T-cell (primary cell): ENCODE measurements at regions of chr20 and their contacts with region 1.

Region 1: DNA sequence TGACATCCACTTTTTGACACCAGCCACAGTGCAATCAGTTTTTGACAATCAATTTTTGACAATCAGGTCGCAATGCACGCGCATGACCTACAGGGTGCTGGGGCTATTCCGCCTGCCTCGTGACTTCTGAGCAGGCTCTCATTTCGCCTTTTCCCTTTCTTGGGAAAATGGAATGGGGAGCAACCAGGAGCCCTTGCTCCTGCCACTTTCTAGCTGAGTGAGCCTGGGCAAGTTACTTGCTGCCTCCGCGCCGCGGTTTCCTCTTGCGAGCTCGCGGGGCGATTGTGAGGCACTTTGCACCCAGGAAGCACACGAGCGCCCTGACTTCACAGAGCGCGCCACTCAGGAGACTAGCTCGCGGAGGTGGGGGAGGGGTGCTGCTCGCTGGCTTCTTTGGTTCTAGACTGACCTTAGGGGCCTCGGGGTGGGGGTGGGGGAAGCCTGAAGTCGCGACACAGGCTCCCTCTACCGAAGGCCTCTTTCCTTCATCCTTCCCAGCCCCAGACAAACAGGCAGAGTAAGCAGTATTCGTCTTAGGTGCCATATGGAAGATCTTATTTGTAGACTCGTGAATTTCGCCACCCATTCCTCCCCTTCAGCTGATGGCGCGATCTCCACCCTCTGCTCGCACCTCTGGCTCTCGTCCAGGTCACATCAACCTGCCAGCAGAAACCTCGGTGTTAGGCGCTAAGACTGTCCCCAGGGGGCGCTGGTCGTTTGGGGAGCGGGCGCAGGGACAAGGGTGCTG is 4.6 kb downstream of the TP53TG5 start:
- DNase-seq: peak; percentile 77 to 96 (median 87)
- ATAC-seq: peak; percentile 85 to 93 (median 91)
- H3K4me3 ChIP-seq: peak overlapping the region; percentile 58 to 62
- H3K4me3 Mint-ChIP-seq: peak overlapping the region; percentile 71 to 85 (median 80)
- H3K27ac ChIP-seq: peak overlapping the region; percentile 83
- H3K27ac Mint-ChIP-seq: peak overlapping the region; percentile 88 to 90
- H3K4me1 ChIP-seq: peaks cover 15 to 26% of the 10 kb centered on the region in 2 experiments
- H3K4me1 Mint-ChIP-seq: peaks cover 28 to 44% (median 39%) of the 10 kb centered on the region in 3 donors
- H3K27me3 ChIP-seq: no peaks in the 10 kb centered on the region
- H3K27me3 Mint-ChIP-seq: no peaks in the 10 kb centered on the region

Region 2: GRCh38 chr20:45229264-45230056 is 144.1 kb before region 1 on chr20:
- CTCF ChIA-PET with region 1: no interaction called
- POLR2A ChIA-PET with region 1: no interaction called
- DNase-seq: peak in 17 of 35 experiments; percentile 3 to 24 (median 13)
- ATAC-seq: no peak
- H3K4me3 ChIP-seq: no peak overlapping the region
- H3K4me3 Mint-ChIP-seq: no peak overlapping the region
- H3K27ac ChIP-seq: no peak overlapping the region
- H3K27ac Mint-ChIP-seq: no peak overlapping the region
- H3K4me1 ChIP-seq: no peaks in the 10 kb centered on the region
- H3K4me1 Mint-ChIP-seq: no peaks in the 10 kb centered on the region
- H3K27me3 ChIP-seq: peaks cover 6 to 20% of the 10 kb centered on the region in 2 experiments
- H3K27me3 Mint-ChIP-seq: peaks cover 42 to 60% of the 10 kb centered on the region in 2 donors

Region 3: GRCh38 chr20:45415774-45416637 is 42.5 kb after region 1 on chr20 and contains the start of gene PIGT:
- CTCF ChIA-PET with region 1: interaction called, 8 to 19 read pairs
- POLR2A ChIA-PET with region 1: interaction called, 5 to 7 read pairs
- DNase-seq: peak; percentile 66 to 96 (median 91)
- ATAC-seq: peak; percentile 98
- H3K4me3 ChIP-seq: peak within 1 kb of the TSS; percentile 86 to 95
- H3K4me3 Mint-ChIP-seq: peak within 1 kb of the TSS; percentile 95 to 96 (median 95)
- H3K27ac ChIP-seq: peak within 1 kb of the TSS; percentile 87
- H3K27ac Mint-ChIP-seq: peak within 1 kb of the TSS; percentile 97 to 99
- H3K4me1 ChIP-seq: peaks cover 7 to 24% of the 10 kb centered on the region in 2 experiments
- H3K4me1 Mint-ChIP-seq: peaks cover 40 to 46% (median 44%) of the 10 kb centered on the region in 3 donors
- H3K27me3 ChIP-seq: no peaks in the 10 kb centered on the region
- H3K27me3 Mint-ChIP-seq: no peaks in the 10 kb centered on the region
- total RNA-seq, gene PIGT: 76.6 to 140 (median 79.4) TPM

Region 4: GRCh38 chr20:45523821-45524220 is 150.3 kb after region 1 on chr20:
- CTCF ChIA-PET with region 1: no interaction called
- POLR2A ChIA-PET with region 1: no interaction called
- DNase-seq: no peak
- ATAC-seq: no peak
- H3K4me3 ChIP-seq: no peak overlapping the region
- H3K4me3 Mint-ChIP-seq: no peak overlapping the region
- H3K27ac ChIP-seq: no peak overlapping the region
- H3K27ac Mint-ChIP-seq: no peak overlapping the region
- H3K4me1 ChIP-seq: no peaks in the 10 kb centered on the region
- H3K4me1 Mint-ChIP-seq: no peaks in the 10 kb centered on the region
- H3K27me3 ChIP-seq: peaks cover 0 to 5% of the 10 kb centered on the region in 2 experiments
- H3K27me3 Mint-ChIP-seq: peaks cover 39 to 45% of the 10 kb centered on the region in 2 donors

Region 5: DNA sequence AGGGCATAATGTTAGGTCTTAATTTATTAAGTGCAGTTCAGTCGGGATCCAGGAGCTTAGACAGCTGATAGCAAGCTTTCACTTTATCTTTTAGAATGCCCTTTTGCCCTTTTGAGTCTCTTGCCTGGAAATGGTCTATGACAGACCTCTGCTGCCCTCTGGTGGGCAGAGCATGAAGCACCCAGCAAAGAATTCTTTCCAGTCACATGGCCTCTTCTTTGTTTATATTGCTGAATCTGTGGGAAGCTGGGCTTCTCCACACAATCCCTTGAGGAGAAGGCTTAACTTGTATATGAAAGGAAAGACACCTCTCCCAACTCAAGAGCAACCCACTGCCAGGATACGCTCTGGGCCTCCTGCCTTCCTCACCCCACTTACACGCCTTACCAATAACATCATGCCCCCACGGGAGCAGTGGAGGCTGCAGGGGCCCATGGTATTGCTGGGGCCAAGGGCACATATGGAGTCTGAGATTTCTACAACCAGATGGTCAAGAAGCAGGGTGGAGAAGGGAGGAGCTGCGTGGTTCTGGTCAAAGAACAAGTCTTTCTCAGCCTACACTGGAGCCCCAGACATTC is 397.7 kb after region 1 on chr20:
- CTCF ChIA-PET with region 1: interaction called in 1 of 2 experiments, 10 read pairs
- POLR2A ChIA-PET with region 1: no interaction called
- DNase-seq: peak; percentile 50 to 89 (median 74)
- ATAC-seq: peak; percentile 70 to 82 (median 74)
- H3K4me3 ChIP-seq: no peak overlapping the region
- H3K4me3 Mint-ChIP-seq: no peak overlapping the region
- H3K27ac ChIP-seq: no peak overlapping the region
- H3K27ac Mint-ChIP-seq: peak overlapping the region in 1 of 2 donors; percentile 52
- H3K4me1 ChIP-seq: peaks cover 0 to 3% of the 10 kb centered on the region in 2 experiments
- H3K4me1 Mint-ChIP-seq: peaks cover 0 to 5% (median 5%) of the 10 kb centered on the region in 3 donors
- H3K27me3 ChIP-seq: peaks cover 0 to 19% of the 10 kb centered on the region in 2 experiments
- H3K27me3 Mint-ChIP-seq: peaks cover 9 to 26% of the 10 kb centered on the region in 2 donors